CD8-positive, alpha-beta T cell (primary cell): ENCODE measurements at regions of chr14 and their contacts with region 1.

Region 1: DNA sequence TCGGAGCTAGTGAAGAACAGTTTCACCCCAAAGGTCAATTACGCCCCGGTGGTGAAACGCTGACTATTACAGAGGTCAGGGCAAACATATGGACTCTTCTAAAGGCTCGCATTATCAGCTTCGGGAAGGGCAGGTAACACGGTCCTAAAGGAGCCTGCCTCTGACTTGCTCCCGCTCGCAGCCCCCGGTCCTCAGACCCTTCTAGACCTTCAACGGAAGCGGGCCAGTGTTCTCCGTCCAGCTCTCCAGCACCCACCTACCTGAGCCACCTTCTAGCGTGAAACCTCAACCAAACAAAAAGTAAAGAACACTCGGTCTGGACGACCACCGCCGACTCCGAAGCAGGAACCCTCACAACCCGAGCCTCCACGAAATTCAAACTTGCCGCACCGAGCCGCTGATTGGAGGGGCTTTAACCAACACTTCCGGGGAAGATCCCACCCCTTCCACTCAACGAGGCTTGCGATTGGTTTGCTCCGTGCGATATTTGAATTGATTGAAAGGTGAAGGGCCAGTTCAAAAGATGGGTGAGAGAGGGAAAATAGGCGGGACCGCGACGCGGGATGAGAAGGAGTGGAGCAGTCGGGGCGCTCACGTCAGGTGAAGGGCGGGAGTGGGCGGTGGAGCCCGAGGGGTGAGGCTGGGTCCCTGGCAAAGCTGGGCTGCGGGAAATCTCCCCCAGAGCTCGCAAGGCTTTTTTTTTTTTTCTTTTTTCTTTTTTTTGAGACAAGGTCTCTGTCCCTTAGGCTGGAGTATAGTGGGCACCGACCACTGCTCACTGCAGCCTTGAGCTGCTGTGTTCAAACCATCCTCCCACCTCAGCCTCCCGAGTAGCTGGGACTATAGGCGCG is at the start of gene DLGAP5:
- DNase-seq: peak; percentile 71 to 96 (median 85)
- ATAC-seq: peak; percentile 98
- H3K4me3 ChIP-seq: peak within 1 kb of the TSS; percentile 66 to 76
- H3K4me3 Mint-ChIP-seq: peak within 1 kb of the TSS; percentile 92
- H3K27ac ChIP-seq: peak within 1 kb of the TSS; percentile 9 to 52
- H3K27ac Mint-ChIP-seq: peak within 1 kb of the TSS; percentile 22
- H3K4me1 ChIP-seq: peaks cover 11% of the 10 kb centered on the region
- H3K4me1 Mint-ChIP-seq: peaks cover 12% of the 10 kb centered on the region
- H3K27me3 ChIP-seq: no peaks in the 10 kb centered on the region
- H3K27me3 Mint-ChIP-seq: no peaks in the 10 kb centered on the region
- CTCF ChIP-seq: no peak
- total RNA-seq, gene DLGAP5: 0.54 TPM in 1 of 2 experiments, not detected in the other

Region 2: DNA sequence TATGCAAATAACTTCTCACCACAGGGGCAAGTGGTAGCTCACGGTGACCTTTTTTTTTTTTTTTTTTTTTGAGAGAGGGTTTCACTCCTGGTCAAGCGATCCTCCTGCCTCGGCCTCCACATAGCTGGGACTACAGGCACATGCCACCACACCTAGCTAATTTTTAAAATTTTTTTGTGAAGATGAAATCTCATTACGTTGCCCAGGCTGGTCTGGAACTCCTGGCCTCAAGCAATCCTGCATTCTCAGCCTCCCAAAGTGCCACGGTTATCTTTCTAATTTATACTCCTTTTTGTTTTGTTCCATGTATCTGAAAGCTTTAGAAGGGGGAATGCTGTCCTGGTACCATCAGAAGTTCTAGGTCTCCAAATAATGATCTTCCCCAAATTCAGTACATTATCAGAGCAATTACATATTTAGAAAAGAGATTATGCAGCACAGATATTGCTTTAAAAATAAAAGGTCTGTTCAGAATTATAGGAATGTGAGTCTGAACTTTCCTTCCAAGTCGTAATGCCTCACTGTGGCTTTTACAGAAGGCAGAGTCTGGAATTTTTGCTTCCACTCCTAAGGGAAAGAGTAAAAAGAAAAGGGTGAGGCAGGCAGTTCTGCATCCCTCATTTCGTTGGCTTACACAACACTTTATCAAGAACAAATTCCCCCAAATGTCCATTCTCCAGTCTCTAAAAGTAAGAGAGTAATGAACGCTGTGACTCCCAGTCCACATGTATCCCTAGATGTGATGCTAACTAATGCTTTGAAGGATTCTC is 361.8 kb before region 1 on chr14:
- CTCF ChIA-PET with region 1: no interaction called
- POLR2A ChIA-PET with region 1: no interaction called
- intact Hi-C with region 1: no loop called
- DNase-seq: no peak
- ATAC-seq: no peak
- H3K4me3 ChIP-seq: no peak overlapping the region
- H3K4me3 Mint-ChIP-seq: no peak overlapping the region
- H3K27ac ChIP-seq: no peak overlapping the region
- H3K27ac Mint-ChIP-seq: no peak overlapping the region
- H3K4me1 ChIP-seq: no peaks in the 10 kb centered on the region
- H3K4me1 Mint-ChIP-seq: no peaks in the 10 kb centered on the region
- H3K27me3 ChIP-seq: no peaks in the 10 kb centered on the region
- H3K27me3 Mint-ChIP-seq: no peaks in the 10 kb centered on the region
- CTCF ChIP-seq: no peak

Region 3: GRCh38 chr14:55265197-55265596 is 73.8 kb after region 1 on chr14:
- CTCF ChIA-PET with region 1: interaction called, 3 read pairs
- POLR2A ChIA-PET with region 1: no interaction called
- intact Hi-C with region 1: loop called in 1 of 2 experiments (anchors 5 kb)
- DNase-seq: peak in 2 of 9 experiments; percentile 22 to 44
- ATAC-seq: no peak
- H3K4me3 ChIP-seq: no peak overlapping the region
- H3K4me3 Mint-ChIP-seq: no peak overlapping the region
- H3K27ac ChIP-seq: no peak overlapping the region
- H3K27ac Mint-ChIP-seq: no peak overlapping the region
- H3K4me1 ChIP-seq: no peaks in the 10 kb centered on the region
- H3K4me1 Mint-ChIP-seq: no peaks in the 10 kb centered on the region
- H3K27me3 ChIP-seq: no peaks in the 10 kb centered on the region
- H3K27me3 Mint-ChIP-seq: no peaks in the 10 kb centered on the region
- CTCF ChIP-seq: no peak

Region 4: DNA sequence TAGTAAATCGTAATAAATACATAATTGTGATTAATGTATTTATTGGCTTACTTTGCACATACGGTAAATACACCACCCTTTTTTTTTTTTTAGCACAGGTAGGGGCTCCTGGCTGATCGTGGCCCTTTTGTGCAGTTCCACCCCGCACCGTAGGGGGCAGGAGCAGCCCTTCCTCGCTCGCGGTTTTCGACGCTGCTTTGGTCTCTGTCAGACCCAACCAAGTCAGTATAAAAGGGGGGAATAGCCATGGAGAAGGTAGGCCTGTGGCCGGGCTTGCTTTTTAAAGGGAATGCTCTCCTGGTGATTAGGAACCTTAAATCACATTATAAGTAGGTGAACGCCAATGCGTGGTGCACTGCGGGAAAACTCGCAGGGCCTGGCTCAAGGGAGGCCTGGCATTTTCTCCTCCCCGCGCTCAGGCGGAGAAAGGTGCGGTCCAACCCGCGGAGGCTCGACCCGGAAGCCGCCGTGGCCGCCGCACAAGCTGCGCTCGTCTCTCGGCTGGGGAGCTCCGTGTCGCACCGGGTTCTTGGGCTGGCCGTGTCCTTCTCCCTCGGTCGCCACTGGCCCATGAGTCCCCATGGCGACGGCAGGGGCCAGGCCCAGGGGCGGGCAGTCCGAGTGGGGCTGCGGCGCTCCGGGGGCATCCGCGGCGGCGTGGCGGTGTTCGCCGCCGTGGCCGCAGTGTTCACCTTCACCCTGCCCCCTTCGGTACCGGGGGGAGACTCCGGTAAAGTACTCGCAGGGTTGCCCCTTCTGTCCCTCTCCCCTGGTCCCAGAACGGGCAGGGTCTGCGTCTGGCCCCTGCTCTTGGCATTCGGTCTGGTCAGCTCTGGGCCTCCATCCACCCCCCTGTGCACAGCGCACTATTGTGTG is 1388.2 kb after region 1 on chr14 and contains the start of gene TMEM260:
- CTCF ChIA-PET with region 1: no interaction called
- POLR2A ChIA-PET with region 1: no interaction called
- intact Hi-C with region 1: loop called in 1 of 2 experiments (anchors 2 kb)
- DNase-seq: peak; percentile 84 to 95 (median 91)
- ATAC-seq: peak; percentile 93
- H3K4me3 ChIP-seq: peak within 1 kb of the TSS; percentile 74 to 83
- H3K4me3 Mint-ChIP-seq: peak within 1 kb of the TSS; percentile 90
- H3K27ac ChIP-seq: peak within 1 kb of the TSS; percentile 72 to 75
- H3K27ac Mint-ChIP-seq: peak within 1 kb of the TSS; percentile 94
- H3K4me1 ChIP-seq: peaks cover 27% of the 10 kb centered on the region
- H3K4me1 Mint-ChIP-seq: peaks cover 40% of the 10 kb centered on the region
- H3K27me3 ChIP-seq: no peaks in the 10 kb centered on the region
- H3K27me3 Mint-ChIP-seq: peaks cover 2% of the 10 kb centered on the region
- CTCF ChIP-seq: peak; percentile 82
- total RNA-seq, gene TMEM260: 4.3 to 6.4 TPM